ENCODE measurements at regions of chr2 and their contacts with region 1.

Region 1: GRCh38 chr2:203225423-203226039 is 13.3 kb upstream of the CYP20A1 start:
- DNase-seq: no peak
- ATAC-seq: no peak
- H3K4me3 ChIP-seq: no peak overlapping the region
- H3K27ac ChIP-seq: no peak overlapping the region
- H3K4me1 ChIP-seq: no peaks in the 10 kb centered on the region
- H3K27me3 ChIP-seq: no peaks in the 10 kb centered on the region
- CTCF ChIP-seq: peak in 4 of 5 experiments; percentile 30 to 54 (median 41)
- POLR2A ChIP-seq: no peak

Region 2: DNA sequence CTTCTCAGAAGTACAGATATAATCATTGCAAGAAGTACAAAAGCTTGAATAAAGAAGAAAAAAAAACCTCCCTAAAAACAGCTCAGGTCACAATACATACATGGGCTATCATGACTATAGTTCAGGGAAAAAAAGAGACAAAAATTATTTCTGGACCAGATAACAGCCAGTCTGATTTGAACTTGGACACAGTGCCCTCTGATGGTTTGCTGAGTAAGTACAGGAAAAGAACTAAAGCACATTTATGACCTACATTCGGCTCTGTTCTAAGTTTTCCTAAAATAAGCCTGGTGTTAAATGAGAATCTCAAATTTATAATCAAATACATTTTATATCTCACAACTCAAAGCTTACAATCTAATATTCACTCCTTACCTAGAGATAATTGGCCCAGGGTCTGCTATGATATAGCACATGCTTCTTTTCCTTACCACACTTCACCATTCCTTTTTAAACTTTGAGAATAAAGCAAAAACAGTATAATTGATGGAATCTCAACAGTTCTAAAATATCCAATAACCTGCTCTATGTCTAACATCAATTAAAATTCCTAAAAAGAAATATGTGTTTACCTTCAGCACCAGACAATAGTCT is 228.4 kb after region 1 on chr2:
- in situ Hi-C with region 1: no loop called
- intact Hi-C with region 1: loop called (anchors 10 kb)
- DNase-seq: no peak
- ATAC-seq: peak; percentile 69 to 86
- H3K4me3 ChIP-seq: no peak overlapping the region
- H3K27ac ChIP-seq: no peak overlapping the region
- H3K4me1 ChIP-seq: peaks cover 0 to 3% of the 10 kb centered on the region in 2 donors
- H3K27me3 ChIP-seq: no peaks in the 10 kb centered on the region
- CTCF ChIP-seq: peak; percentile 28 to 67 (median 50)
- POLR2A ChIP-seq: no peak

Region 3: GRCh38 chr2:204127238-204127637 is 901.7 kb after region 1 on chr2:
- in situ Hi-C with region 1: no loop called
- intact Hi-C with region 1: no loop called
- DNase-seq: no peak
- ATAC-seq: no peak
- H3K4me3 ChIP-seq: no peak overlapping the region
- H3K27ac ChIP-seq: no peak overlapping the region
- H3K4me1 ChIP-seq: no peaks in the 10 kb centered on the region
- H3K27me3 ChIP-seq: no peaks in the 10 kb centered on the region
- CTCF ChIP-seq: no peak
- POLR2A ChIP-seq: no peak

Measured in gastrocnemius medialis (tissue), 4 donors.